H1 (cell line): ENCODE measurements at regions of chr15 and their contacts with region 1.

Region 1: DNA sequence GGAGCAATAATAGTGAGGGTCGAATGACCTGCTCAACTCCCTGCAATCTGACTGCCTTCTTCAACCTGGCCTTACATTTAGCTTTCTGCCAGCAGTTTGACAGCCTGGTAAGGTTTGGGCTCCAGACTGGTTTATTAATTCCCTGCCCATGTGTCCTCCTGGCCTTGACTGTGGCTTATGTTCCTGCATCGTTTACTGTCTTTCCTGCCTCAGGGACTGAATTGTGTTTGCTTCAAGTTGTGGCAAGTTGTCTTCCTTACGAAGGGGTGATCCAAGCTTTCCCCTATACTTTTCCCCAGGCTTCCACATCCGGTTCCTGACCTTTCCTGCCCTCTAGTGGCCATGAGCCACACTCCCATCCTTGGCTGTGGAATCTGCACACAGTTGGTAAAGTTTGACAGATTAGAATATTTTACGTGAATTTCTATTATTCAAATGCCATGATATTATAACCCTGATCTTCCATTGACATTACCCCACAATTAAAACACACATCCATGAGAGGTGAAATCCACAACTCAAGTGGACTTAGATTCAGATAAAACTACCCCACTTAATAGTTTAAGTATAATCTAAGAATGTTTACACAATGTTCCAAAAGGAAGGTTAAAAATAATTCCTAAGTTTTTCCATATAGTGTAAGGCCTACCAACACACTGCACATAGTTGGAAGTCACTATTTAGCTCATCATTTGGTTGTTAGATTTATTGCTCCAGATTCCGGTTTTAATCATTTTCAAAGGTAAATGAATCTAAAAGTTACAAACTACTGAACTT is 95.7 kb downstream of the NEDD4 start:
- DNase-seq: peak; percentile 23 to 62
- H3K4me3 ChIP-seq: no peak overlapping the region
- H3K27ac ChIP-seq: no peak overlapping the region
- H3K4me1 ChIP-seq: peaks cover 0 to 3% (median 0%) of the 10 kb centered on the region in 4 experiments; a peak in 2 of 7 replicates
- H3K27me3 ChIP-seq: no peaks in the 10 kb centered on the region
- CTCF ChIP-seq: peak; percentile 79 to 94 (median 82)
- EP300 ChIP-seq: no peak
- POLR2A ChIP-seq: no peak
- RAD21 ChIP-seq: peak; percentile 74 to 80

Region 2: GRCh38 chr15:55884223-55884622 is 13.5 kb before region 1 on chr15:
- CTCF ChIA-PET with region 1: interaction called, 11 read pairs
- POLR2A ChIA-PET with region 1: no interaction called
- DNase-seq: no peak
- H3K4me3 ChIP-seq: no peak overlapping the region
- H3K27ac ChIP-seq: no peak overlapping the region
- H3K4me1 ChIP-seq: no peaks in the 10 kb centered on the region
- H3K27me3 ChIP-seq: no peaks in the 10 kb centered on the region; a peak in 1 of 7 replicates
- CTCF ChIP-seq: no peak
- EP300 ChIP-seq: no peak
- POLR2A ChIP-seq: no peak
- RAD21 ChIP-seq: no peak

Region 3: DNA sequence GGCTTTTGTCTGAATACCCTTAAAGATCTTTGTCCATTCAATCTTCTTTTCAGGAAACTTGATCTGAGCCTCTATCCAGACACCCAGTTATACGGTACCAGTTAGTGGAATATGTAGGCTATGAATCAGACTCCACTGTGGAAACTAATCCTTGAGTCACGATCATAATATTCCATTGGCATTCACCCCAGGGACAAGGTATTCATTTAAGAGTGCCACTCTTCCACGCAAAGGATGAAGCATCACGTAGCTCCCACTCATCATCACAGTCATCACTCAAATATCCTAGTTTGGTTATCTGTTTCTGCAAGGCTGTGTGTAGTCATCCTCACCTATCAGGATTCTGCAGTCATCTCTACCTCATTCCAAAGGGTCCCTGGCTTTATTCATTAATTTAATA is 10.0 kb after region 1 on chr15:
- CTCF ChIA-PET with region 1: interaction called, 10 read pairs
- POLR2A ChIA-PET with region 1: no interaction called
- DNase-seq: no peak
- H3K4me3 ChIP-seq: no peak overlapping the region
- H3K27ac ChIP-seq: no peak overlapping the region
- H3K4me1 ChIP-seq: no peaks in the 10 kb centered on the region
- H3K27me3 ChIP-seq: no peaks in the 10 kb centered on the region
- CTCF ChIP-seq: no peak
- EP300 ChIP-seq: no peak
- POLR2A ChIP-seq: no peak
- RAD21 ChIP-seq: no peak

Region 4: DNA sequence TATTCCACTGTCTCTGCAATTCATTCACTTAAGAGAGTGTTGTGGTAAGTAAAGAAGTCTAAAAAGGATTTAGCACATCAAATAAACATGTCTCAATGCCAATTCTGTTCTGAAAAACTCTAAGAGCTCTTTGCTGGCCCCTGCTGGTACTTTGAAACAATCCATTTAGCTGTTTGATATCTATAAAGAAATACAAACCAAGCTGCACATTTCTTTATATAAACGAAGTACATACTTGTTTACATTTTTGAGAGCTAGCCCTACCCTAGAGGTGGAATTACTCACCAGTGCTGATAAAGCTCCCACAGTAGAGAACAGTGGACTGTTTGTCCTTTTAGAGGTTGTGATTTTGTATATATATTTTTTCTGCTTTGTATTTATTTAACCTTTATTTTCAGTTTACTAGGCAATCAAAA is 20.1 kb after region 1 on chr15:
- CTCF ChIA-PET with region 1: interaction called, 31 read pairs
- POLR2A ChIA-PET with region 1: no interaction called
- DNase-seq: no peak
- H3K4me3 ChIP-seq: no peak overlapping the region
- H3K27ac ChIP-seq: no peak overlapping the region
- H3K4me1 ChIP-seq: no peaks in the 10 kb centered on the region
- H3K27me3 ChIP-seq: no peaks in the 10 kb centered on the region
- CTCF ChIP-seq: peak in 2 of 3 experiments; percentile 23 to 27; a peak in 2 of 4 replicates
- EP300 ChIP-seq: no peak
- POLR2A ChIP-seq: no peak
- RAD21 ChIP-seq: peak in 1 of 2 experiments; percentile 18; a peak in 1 of 4 replicates